ENCODE measurements at regions of chr15 and their contacts with region 1.

Region 1: DNA sequence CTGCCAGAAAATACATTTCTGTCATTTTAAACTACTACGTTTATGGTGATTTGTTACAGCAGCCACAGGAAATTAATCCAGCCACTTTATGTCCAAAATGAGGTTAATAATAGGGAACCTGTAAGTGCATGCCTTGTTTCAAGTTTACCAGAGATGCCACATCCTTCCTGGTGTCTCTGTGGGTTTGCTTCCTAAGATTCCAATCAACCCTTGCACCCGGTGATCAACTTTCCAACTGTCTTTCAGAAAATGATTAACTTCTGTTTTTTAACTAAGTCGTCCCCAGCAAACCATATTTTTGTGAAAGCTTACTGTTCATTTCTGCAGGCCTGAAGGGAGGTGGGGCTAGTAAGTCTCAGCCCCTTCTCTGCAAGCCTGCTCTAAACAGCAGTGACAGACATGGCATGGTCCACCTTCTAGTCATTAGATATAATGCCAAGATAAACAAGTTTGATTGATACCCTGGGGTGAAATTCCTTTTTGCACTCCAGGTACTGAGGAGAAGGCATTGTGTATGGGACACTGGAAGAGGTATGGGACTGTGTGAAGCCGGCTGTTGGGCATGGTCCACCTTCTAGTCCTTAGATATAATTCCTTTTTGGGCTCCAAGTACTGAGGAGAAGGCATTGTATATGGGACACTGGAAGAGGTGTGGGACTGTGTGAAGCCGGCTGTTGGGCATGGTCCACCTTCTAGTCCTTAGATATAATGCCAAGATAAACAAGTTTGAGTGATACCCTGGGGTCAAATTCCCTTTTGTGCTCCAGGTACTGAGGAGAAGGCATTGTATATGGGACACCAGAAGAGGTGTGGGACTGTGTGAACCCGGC is 11.1 kb upstream of the TMC3 start:
- DNase-seq: no peak
- ATAC-seq: peak in 1 of 2 donors; percentile 50
- H3K4me3 ChIP-seq: no peak overlapping the region
- H3K27ac ChIP-seq: no peak overlapping the region
- H3K4me1 ChIP-seq: no peaks in the 10 kb centered on the region
- H3K27me3 ChIP-seq: no peaks in the 10 kb centered on the region

Region 2: DNA sequence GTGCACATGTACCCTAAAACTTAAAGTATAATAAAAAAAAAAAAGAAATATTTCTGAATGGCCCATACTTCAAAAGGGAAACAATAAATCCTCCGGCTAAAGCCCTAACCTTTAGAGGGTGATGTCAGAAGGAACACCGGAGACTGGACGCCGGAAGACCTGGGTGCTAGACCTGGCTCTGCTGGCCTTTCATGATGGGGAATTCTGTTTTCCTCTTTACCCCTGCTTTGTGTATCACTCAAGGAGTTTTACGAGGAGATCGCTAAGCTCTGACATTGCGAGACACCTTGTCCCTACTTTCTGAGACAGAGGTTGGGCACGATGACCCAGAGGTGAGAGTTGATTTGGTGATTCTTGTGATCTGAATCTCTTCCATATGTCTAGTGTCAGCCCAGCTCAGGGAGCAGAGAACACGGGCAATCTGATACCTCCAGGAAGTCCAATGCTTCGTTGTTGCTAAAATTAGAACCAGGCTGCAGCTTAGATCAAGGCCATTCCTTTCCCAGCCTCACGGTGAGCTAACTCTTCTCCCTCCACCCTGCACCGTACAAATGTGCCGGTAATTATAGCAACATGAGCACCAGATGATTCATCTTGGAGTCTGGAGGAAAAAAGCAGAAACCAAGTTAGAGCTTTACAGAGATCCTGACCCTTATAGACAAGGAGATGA is 293.1 kb before region 1 on chr15:
- intact Hi-C with region 1: loop called in 1 of 4 experiments (anchors 10 kb)
- DNase-seq: no peak
- ATAC-seq: peak; percentile 69 to 88
- H3K4me3 ChIP-seq: no peak overlapping the region
- H3K27ac ChIP-seq: peak overlapping the region; percentile 75
- H3K4me1 ChIP-seq: peaks cover 10% of the 10 kb centered on the region
- H3K27me3 ChIP-seq: no peaks in the 10 kb centered on the region

Region 3: GRCh38 chr15:81286621-81287121 is 98.4 kb before region 1 on chr15:
- intact Hi-C with region 1: loop called in 1 of 4 experiments (anchors 10 kb)
- DNase-seq: no peak
- ATAC-seq: no peak
- H3K4me3 ChIP-seq: no peak overlapping the region
- H3K27ac ChIP-seq: no peak overlapping the region
- H3K4me1 ChIP-seq: peaks cover 2% of the 10 kb centered on the region
- H3K27me3 ChIP-seq: no peaks in the 10 kb centered on the region

Measured in right cardiac atrium (tissue), 5 donors.